PC-9 (cell line): ENCODE measurements at regions of chr4 and their contacts with region 1.

Region 1: DNA sequence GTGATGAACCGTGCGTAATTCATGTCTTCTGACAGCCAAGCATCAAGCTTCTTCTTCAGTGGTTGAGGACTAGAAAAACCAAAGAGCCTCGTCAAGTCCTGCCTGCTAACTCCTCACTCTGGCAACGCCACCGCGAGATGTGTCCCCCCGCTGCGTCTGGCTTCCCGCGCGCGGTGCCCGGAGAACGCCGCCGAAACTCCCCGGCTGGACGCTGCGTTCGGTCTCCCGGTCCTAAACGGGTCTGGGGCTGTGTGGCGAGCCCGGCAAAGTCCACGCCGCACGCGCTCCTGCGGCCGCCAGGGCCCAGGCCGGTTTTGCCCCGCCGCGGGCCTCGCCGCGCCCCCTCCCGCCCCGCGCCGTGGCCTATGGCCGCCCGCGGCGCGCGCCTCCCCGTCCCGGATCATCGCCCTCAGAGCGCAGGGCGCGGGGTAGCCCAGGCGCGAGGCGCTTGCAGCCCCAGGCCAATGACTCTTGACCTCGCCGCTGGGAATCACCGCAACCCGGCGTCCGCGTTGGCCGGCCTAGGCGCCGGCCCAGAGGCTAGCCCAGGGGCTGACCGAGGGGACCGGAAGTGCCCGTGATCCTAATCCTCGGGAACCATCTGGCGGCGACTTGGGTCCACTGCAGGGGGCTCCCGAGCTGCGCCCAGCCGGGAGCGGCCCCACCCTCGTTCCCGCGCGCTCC is at the start of gene AADAT:
- DNase-seq: peak; percentile 44 to 77
- H3K4me3 ChIP-seq: peak within 1 kb of the TSS; percentile 67
- H3K27ac ChIP-seq: no peak within 1 kb of the TSS
- H3K4me1 ChIP-seq: 0 out of 2 replicates have a peak, but pooled peaks cover 5% of the 10 kb centered on the region
- H3K27me3 ChIP-seq: no peaks in the 10 kb centered on the region
- CTCF ChIP-seq: peak; percentile 71
- total RNA-seq, gene AADAT: 2.6 and 3.2 TPM in 2 replicates

Region 2: DNA sequence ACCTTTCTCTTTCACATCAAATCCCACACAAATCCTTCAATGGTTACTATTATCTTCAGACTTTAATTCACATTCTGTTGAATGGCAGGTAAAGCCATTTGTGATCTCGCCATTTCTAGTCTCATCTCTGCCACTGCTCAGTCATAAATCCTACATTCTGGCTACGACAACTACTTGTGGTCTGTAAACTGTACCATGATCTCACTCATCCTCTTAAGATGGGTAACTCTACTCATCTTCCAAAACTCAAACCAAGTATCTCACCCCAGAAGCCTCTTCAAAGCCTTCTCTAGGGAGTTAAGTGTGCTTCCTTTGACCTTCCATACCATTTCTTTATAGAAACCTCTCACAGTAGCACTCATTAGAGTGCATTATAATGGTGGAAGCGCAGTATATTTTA is 579.2 kb before region 1 on chr4:
- CTCF ChIA-PET with region 1: no interaction called
- POLR2A ChIA-PET with region 1: no interaction called
- intact Hi-C with region 1: no loop called
- DNase-seq: no peak
- H3K4me3 ChIP-seq: no peak overlapping the region
- H3K27ac ChIP-seq: no peak overlapping the region
- H3K4me1 ChIP-seq: no peaks in the 10 kb centered on the region
- H3K27me3 ChIP-seq: no peaks in the 10 kb centered on the region
- CTCF ChIP-seq: no peak

Region 3: DNA sequence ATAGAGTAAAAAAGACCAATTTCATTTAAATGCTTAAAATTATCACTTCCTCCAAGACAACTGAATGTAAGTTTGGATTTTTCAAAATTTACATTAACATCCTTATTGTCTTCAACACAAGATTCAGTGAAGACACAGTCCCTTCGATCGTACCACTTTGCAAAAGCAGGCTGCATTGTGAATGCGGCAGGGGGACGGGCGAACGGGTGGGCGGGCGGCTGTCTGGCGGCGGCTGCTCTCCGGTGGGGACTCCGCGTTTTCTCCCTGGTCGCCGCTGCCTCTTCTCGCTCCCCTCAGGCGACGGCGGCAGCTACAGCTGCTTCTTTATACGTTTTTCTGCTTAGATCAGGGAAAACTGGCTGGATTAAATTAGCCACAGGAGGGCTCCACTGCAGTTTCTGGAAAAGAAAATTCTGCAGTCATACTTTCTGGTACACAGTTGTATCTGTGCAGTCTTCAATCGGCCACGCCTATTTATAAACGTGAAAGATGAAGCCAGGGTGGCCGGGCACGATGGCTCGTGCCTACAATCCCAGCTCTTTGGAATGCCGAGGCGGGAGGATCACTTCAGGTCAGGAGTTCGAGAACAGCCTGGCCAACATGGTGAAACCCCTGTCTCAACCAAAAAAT is 298.2 kb before region 1 on chr4:
- CTCF ChIA-PET with region 1: no interaction called
- POLR2A ChIA-PET with region 1: no interaction called
- intact Hi-C with region 1: loop called (anchors 1 kb)
- DNase-seq: peak in 1 of 2 experiments; percentile 39
- H3K4me3 ChIP-seq: peak overlapping the region; percentile 53; the same call in 1 of the 2 replicates
- H3K27ac ChIP-seq: peak overlapping the region; percentile 35
- H3K4me1 ChIP-seq: peaks cover 10% of the 10 kb centered on the region; the same call in 1 of the 2 replicates
- H3K27me3 ChIP-seq: peaks cover 3% of the 10 kb centered on the region; the same call in 1 of the 2 replicates
- CTCF ChIP-seq: peak; percentile 31; the same call in 1 of the 2 replicates

Region 4: DNA sequence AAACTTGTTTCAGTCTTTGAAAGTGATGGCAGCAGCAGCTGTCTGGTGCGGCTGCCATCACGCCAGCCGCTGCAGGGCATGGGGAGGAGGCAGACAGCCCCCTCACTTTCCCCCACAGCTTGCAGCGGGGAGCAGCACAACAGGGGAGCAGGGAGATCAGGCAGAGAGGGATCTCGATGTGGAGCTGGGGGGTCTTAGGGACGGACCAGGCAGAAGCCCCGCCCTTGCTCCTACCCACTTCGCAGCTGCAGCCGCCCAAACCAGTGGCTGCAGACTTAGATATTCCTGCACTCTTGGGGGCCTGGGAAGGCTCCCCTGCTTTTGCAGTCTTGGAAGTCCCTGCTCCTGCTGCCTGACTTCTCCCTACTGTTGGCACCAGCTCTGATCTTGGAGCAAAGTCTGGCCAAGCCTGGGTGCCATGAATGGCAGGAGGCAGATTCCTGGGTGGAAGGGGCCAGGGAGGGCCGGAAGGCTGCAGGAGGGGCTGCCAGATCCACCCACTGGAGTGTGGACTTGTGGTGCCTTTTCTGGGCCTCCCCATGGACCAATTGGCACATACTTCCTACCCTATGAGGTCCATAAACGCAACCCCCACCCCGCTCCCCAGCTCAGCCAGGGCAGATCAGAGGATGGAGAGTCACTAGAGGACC is 49.7 kb before region 1 on chr4:
- CTCF ChIA-PET with region 1: no interaction called
- POLR2A ChIA-PET with region 1: no interaction called
- intact Hi-C with region 1: no loop called
- DNase-seq: no peak
- H3K4me3 ChIP-seq: no peak overlapping the region
- H3K27ac ChIP-seq: no peak overlapping the region
- H3K4me1 ChIP-seq: no peaks in the 10 kb centered on the region
- H3K27me3 ChIP-seq: no peaks in the 10 kb centered on the region
- CTCF ChIP-seq: no peak